Mucosa of descending colon (tissue), 3 donors: ENCODE measurements at regions of chr17 and their contacts with region 1.

Region 1: DNA sequence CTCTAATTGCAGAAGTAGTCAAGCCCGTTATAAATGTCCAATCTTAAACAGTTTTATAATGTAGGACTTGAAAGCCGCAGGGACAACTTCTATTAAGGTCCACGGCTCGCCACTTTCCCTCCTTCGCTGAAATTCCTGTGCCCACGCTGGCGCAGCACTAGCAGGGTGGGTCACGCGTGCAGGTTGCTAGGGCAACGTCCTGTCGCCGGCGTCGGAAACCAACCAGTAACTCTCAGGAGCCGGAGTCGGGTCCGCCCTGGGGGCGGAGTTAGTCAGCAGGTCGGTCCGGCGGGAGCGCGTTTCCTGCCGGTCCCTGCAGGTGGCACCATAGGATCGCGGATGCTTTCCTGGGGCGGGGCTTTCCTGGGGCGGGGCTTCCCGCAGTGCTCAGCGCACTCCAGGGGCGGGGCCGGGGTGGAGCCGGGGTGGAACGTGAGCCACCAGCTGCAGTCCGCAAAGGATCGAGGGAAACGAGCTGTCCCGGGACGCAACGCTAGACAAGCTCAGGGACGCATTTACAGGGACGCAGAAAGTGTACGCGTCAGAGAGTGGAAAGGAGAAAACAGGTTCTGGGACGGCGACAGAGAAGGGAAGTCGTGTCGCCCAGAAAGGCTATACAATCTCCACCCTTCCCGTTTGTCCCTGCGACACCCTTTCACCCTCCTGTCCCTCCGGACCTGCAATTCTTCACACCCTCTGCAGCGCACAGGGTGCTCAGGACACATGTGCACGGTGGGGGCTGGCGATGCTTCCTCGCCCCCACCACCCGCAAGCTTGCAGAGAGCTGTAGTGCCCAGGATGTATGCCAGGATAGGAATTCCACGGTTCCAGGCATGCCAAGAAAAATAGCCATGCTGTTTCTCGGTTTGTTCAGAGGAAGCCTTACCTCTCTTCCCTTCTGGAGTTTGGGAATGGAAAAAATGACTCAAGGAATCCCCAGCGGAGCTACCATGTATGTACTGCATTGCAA is 12.4 kb downstream of the COPZ2 start:
- DNase-seq: peak; percentile 99
- ATAC-seq: peak; percentile 92
- H3K4me3 ChIP-seq: no peak overlapping the region
- H3K4me1 ChIP-seq: peaks cover 34% of the 10 kb centered on the region
- CTCF ChIP-seq: peak; percentile 68

Region 2: DNA sequence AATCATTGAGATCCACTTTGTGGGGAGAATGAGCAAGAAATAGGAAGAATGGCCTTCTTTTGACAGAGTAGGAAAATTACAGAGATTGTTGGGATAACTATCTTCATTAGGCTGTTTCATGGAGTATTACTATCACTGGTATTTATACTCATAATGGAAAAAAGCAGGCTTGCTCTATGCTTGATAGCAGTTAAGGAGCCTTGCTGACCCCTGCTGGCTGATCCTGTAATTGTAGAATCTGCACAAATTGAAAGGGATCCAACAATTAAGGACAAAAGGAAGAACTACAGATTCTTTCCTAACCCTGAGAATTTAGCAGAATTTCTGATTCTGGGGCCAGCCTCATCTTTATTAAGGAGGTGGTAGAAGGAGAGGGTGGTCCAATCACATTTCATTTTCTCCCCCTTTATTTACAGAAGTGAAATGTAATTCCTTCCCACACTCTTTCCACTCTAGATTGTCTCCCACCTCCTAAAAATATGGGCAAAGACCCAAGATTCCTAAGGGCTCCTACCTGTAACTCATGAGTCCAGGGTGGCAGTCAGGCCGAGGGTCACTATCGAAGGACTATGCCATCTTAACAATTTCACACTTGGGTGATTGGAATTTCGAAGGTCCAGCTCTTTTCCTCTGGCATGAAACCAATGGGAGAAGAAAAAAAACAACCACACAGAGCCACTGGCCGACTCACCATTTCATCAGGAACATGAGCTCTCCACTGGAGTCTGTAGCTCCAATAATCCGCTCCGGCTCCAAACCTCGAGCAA is 49.3 kb after region 1 on chr17:
- intact Hi-C with region 1: loop called (anchors 2 to 5 kb)
- DNase-seq: peak in 1 of 3 donors; percentile 97
- ATAC-seq: peak; percentile 87
- H3K4me3 ChIP-seq: no peak overlapping the region
- H3K4me1 ChIP-seq: no peaks in the 10 kb centered on the region
- CTCF ChIP-seq: peak; percentile 53

Region 3: DNA sequence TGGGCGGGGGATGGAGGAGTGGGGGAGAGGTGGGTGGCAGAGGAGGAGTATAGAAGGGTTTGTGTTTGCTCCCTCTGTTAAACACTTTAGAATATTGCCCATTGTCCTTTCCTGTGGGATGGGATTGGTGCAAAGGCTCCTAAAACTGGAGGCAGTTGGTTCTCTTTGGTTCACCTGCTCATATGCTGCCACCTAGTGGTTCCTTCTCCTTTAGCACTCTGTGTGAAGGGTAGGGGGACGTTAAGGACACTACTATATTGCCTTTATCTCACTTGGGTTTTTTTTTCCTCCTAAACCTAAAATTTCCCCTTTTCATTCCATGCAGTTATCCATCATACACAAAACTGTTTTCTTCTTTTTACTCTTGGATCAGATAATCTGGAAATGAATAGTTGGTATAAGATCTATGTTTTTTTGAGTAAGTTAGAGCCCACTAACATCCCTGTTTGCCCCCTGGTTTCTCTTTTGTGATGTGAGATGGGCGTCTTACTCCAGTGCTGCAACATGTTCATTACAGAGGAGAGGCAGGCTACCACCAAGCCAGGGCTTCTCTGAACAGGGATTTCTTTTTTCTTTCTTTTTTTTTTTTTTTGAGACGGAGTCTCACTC is 106.1 kb after region 1 on chr17:
- intact Hi-C with region 1: loop called in 1 of 2 experiments (anchors 5 kb)
- DNase-seq: peak in 1 of 3 donors; percentile 86
- ATAC-seq: peak; percentile 85
- H3K4me3 ChIP-seq: no peak overlapping the region
- H3K4me1 ChIP-seq: no peaks in the 10 kb centered on the region
- CTCF ChIP-seq: peak; percentile 42